IMR-90 (cell line): ENCODE measurements at regions of chr9 and their contacts with region 1.

Region 1: GRCh38 chr9:4679268-4680172 is at the start of gene CDC37L1:
- DNase-seq: peak; percentile 94
- ATAC-seq: peak; percentile 92
- H3K4me3 ChIP-seq: peak within 1 kb of the TSS; percentile 60
- H3K27ac ChIP-seq: peak within 1 kb of the TSS; percentile 93
- H3K4me1 ChIP-seq: peaks cover 7% of the 10 kb centered on the region
- H3K27me3 ChIP-seq: no peaks in the 10 kb centered on the region
- CTCF ChIP-seq: peak; percentile 59
- POLR2A ChIP-seq: peak; percentile 94
- RAD21 ChIP-seq: peak; percentile 42; the same call in 1 of the 2 replicates
- total RNA-seq, gene CDC37L1: 6.6 and 12.8 TPM in 2 replicates

Region 2: DNA sequence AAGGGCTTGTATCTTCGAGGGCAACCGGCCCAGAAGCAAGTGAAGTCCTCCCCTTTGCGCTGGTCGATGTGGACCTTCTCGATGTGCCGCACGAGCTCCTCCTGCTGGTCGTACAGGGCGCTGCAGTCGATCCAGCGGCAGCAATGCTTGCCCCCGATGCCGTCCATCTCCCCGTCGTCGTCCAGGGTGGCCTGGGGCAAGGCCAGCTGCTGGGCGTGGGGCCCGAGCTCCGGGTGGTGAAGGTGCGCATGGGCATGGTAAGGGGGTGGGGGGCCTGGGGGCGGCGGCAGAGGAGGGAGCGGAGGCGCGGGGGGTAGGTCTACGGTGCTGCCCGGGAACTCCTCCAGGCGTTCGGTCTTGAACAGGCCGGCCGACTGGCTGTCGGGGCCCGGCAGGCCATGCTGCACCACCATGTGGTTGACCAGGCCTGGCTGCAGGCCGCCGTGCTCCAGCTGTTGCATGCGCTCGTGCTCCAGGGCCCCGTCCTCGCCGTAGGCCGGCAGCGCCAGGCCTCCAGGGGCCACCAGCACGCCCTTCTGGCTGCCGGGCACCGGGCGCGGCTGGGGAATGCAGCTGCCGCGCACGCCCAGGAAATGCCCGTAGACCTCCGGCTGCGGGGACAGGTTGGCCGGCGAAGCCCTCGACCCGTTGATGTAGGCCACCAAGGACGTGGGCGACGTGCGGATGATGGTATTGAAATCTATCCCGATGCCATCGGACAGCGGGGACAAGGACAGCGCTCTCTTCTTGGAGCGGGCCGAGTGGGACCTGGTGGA is 561.5 kb before region 1 on chr9:
- CTCF ChIA-PET with region 1: no interaction called
- POLR2A ChIA-PET with region 1: no interaction called
- dilution Hi-C with region 1: no loop called
- in situ Hi-C with region 1: loop called (anchors 25 kb)
- intact Hi-C with region 1: no loop called
- DNase-seq: no peak
- ATAC-seq: no peak
- H3K4me3 ChIP-seq: no peak overlapping the region
- H3K27ac ChIP-seq: no peak overlapping the region
- H3K4me1 ChIP-seq: peaks cover 14% of the 10 kb centered on the region
- H3K27me3 ChIP-seq: no peaks in the 10 kb centered on the region
- CTCF ChIP-seq: no peak
- POLR2A ChIP-seq: no peak
- RAD21 ChIP-seq: no peak

Region 3: DNA sequence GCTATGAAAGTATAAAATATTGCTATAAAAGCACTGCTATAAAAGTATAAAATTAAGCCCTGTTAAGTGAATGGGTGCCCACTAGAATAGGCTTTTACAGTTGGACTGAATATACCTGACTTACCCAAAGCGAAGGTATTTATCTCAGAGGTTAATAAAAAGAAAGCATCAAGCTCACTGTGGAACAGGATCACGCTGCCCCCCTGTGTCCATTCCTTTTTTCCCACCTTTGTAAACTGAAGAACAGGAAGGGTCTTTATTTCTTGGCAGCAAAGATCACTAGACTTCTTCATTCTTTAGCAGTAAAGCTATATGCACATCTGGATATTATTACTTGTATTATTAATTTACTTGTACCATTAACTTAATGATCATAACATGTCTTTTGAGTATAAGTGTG is 39.5 kb before region 1 on chr9:
- CTCF ChIA-PET with region 1: no interaction called
- POLR2A ChIA-PET with region 1: no interaction called
- dilution Hi-C with region 1: no loop called
- in situ Hi-C with region 1: no loop called
- intact Hi-C with region 1: no loop called
- DNase-seq: no peak
- ATAC-seq: no peak
- H3K4me3 ChIP-seq: no peak overlapping the region
- H3K27ac ChIP-seq: no peak overlapping the region
- H3K4me1 ChIP-seq: no peaks in the 10 kb centered on the region
- H3K27me3 ChIP-seq: no peaks in the 10 kb centered on the region; the same call in 1 of the 2 replicates
- CTCF ChIP-seq: peak; percentile 49
- POLR2A ChIP-seq: no peak
- RAD21 ChIP-seq: peak; percentile 55

Region 4: GRCh38 chr9:4725706-4726442 is 46.4 kb after region 1 on chr9:
- CTCF ChIA-PET with region 1: no interaction called
- POLR2A ChIA-PET with region 1: no interaction called
- dilution Hi-C with region 1: no loop called
- in situ Hi-C with region 1: no loop called
- intact Hi-C with region 1: loop called (anchors 5 kb)
- DNase-seq: no peak
- ATAC-seq: no peak
- H3K4me3 ChIP-seq: no peak overlapping the region
- H3K27ac ChIP-seq: no peak overlapping the region
- H3K4me1 ChIP-seq: no peaks in the 10 kb centered on the region
- H3K27me3 ChIP-seq: no peaks in the 10 kb centered on the region
- CTCF ChIP-seq: no peak
- POLR2A ChIP-seq: no peak
- RAD21 ChIP-seq: no peak